ENCODE measurements at regions of chr5 and their contacts with region 1.

Region 1: GRCh38 chr5:10540036-10540544 is 23.8 kb upstream of the ANKRD33B start:
- DNase-seq: no peak
- H3K4me3 ChIP-seq: no peak overlapping the region
- H3K27ac ChIP-seq: no peak overlapping the region
- H3K4me1 ChIP-seq: no peaks in the 10 kb centered on the region
- H3K27me3 ChIP-seq: no peaks in the 10 kb centered on the region
- CTCF ChIP-seq: no peak

Region 2: GRCh38 chr5:10528056-10528816 is 11.9 kb before region 1 on chr5:
- CTCF ChIA-PET with region 1: interaction called, 3 read pairs
- POLR2A ChIA-PET with region 1: interaction called, 10 read pairs
- intact Hi-C with region 1: no loop called
- DNase-seq: peak in 1 of 2 experiments; percentile 57
- H3K4me3 ChIP-seq: no peak overlapping the region
- H3K27ac ChIP-seq: no peak overlapping the region
- H3K4me1 ChIP-seq: peaks cover 36% of the 10 kb centered on the region
- H3K27me3 ChIP-seq: no peaks in the 10 kb centered on the region
- CTCF ChIP-seq: 0 out of 2 replicates have a peak, but pooled peaks have one; percentile 14

Region 3: GRCh38 chr5:10565785-10566542 is 25.9 kb after region 1 on chr5:
- CTCF ChIA-PET with region 1: no interaction called
- POLR2A ChIA-PET with region 1: no interaction called
- intact Hi-C with region 1: no loop called
- DNase-seq: peak in 1 of 2 experiments; percentile 65
- H3K4me3 ChIP-seq: peak overlapping the region; percentile 90; the same call in 1 of the 2 replicates
- H3K27ac ChIP-seq: no peak overlapping the region
- H3K4me1 ChIP-seq: peaks cover 46% of the 10 kb centered on the region
- H3K27me3 ChIP-seq: no peaks in the 10 kb centered on the region
- CTCF ChIP-seq: no peak